Esophagus muscularis mucosa (tissue), 4 donors: ENCODE measurements at regions of chrX and their contacts with region 1.

Region 1: GRCh38 chrX:22192417-22193060 is 80.2 kb upstream of the CBLL2 start:
- DNase-seq: no peak
- H3K4me3 ChIP-seq: peak overlapping the region in 1 of 4 donors; percentile 18
- H3K27ac ChIP-seq: no peak overlapping the region
- H3K4me1 ChIP-seq: peaks cover 0 to 3% (median 0%) of the 10 kb centered on the region in 4 donors
- H3K27me3 ChIP-seq: no peaks in the 10 kb centered on the region
- CTCF ChIP-seq: peak; percentile 68 to 77 (median 69)
- EP300 ChIP-seq: no peak
- POLR2A ChIP-seq: no peak

Region 2: DNA sequence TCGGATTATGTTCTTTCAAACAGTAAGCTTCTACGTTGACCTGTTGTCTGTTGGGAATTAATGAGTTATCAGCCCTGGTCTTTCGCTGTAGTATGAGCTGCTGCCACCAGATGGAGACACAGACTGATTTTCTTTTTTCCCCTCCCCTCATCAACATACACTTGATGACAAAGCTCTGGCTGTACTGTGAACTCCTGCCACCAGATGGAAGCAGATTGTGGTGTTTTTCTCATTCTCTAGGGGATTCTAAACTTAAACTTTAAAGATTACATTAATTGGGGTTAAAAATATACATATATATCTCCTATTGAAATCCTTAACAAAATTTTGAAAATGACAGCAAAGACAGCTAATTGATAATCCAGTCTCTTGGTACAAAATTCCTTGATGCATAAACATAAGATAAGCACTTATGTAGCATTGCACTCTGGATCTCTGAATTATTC is 207.2 kb before region 1 on chrX:
- intact Hi-C with region 1: loop called (anchors 2 kb)
- DNase-seq: no peak
- H3K4me3 ChIP-seq: no peak overlapping the region
- H3K27ac ChIP-seq: no peak overlapping the region
- H3K4me1 ChIP-seq: peaks cover 0 to 7% (median 2%) of the 10 kb centered on the region in 4 donors
- H3K27me3 ChIP-seq: no peaks in the 10 kb centered on the region
- CTCF ChIP-seq: peak; percentile 82 to 96 (median 92)
- EP300 ChIP-seq: no peak
- POLR2A ChIP-seq: no peak

Region 3: GRCh38 chrX:22135994-22136684 is 56.4 kb before region 1 on chrX:
- intact Hi-C with region 1: loop called (anchors 5 kb)
- DNase-seq: no peak
- H3K4me3 ChIP-seq: peak overlapping the region in 1 of 4 donors; percentile 3
- H3K27ac ChIP-seq: peak overlapping the region; percentile 58 to 80 (median 70)
- H3K4me1 ChIP-seq: peaks cover 0 to 37% (median 34%) of the 10 kb centered on the region in 4 donors
- H3K27me3 ChIP-seq: no peaks in the 10 kb centered on the region
- CTCF ChIP-seq: peak; percentile 61 to 81 (median 68)
- EP300 ChIP-seq: no peak
- POLR2A ChIP-seq: no peak